ENCODE measurements at regions of chr10 and their contacts with region 1.

Region 1: GRCh38 chr10:126384269-126384873 is 3.9 kb downstream of the ADAM12 start:
- DNase-seq: no peak
- H3K4me3 ChIP-seq: no peak overlapping the region
- H3K27ac ChIP-seq: peak overlapping the region in 1 of 2 donors; percentile 43
- H3K4me1 ChIP-seq: no peaks in the 10 kb centered on the region
- H3K27me3 ChIP-seq: no peaks in the 10 kb centered on the region
- CTCF ChIP-seq: no peak
- POLR2A ChIP-seq: no peak

Region 2: GRCh38 chr10:126397640-126398382 is 13.4 kb after region 1 on chr10:
- intact Hi-C with region 1: no loop called
- DNase-seq: no peak
- H3K4me3 ChIP-seq: no peak overlapping the region
- H3K27ac ChIP-seq: peak overlapping the region in 1 of 2 donors; percentile 20
- H3K4me1 ChIP-seq: no peaks in the 10 kb centered on the region
- H3K27me3 ChIP-seq: no peaks in the 10 kb centered on the region
- CTCF ChIP-seq: no peak
- POLR2A ChIP-seq: no peak

Region 3: GRCh38 chr10:126716366-126716765 is 332.0 kb after region 1 on chr10:
- intact Hi-C with region 1: loop called (anchors 5 kb)
- DNase-seq: no peak
- H3K4me3 ChIP-seq: no peak overlapping the region
- H3K27ac ChIP-seq: no peak overlapping the region
- H3K4me1 ChIP-seq: no peaks in the 10 kb centered on the region
- H3K27me3 ChIP-seq: no peaks in the 10 kb centered on the region
- CTCF ChIP-seq: no peak
- POLR2A ChIP-seq: no peak